ENCODE measurements at regions of chr16 and their contacts with region 1.

Region 1: DNA sequence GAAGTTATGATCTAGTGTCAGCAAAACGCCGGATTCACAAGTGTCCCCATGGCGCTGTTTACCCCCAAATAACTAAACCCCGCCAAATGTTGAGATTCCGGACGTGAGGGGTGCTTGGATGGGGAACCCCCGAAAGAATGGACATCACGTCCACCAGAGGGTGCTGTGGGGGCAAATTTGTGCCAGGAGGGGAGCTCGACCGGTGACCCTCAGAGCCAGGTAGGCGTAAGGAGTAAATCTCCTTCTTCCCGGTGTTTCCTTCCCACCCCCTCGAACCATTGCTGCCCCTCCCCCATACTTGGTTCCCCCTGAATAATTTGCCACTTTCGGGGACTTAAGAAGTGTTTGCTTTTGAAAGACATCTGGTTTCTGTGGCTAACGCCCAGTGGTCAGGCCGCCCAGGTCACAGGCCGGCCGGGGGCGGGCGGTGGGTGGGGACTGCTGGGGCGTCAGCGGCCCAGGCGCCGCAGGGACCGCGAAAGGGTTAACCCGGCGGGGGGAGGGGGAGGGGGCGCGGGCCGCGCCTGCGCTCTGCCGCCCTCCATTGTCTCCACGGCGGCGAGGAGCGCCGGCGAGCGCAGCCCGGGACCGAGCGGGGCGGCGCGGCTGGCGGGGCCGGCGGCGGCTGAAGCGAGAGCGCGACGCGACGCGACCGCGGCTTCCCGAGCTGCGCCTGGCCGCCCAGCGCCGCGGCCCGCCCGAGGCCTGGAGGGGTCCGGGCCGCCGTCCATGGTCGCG is at the start of gene ZNRF1:
- DNase-seq: peak; percentile 82

Region 2: DNA sequence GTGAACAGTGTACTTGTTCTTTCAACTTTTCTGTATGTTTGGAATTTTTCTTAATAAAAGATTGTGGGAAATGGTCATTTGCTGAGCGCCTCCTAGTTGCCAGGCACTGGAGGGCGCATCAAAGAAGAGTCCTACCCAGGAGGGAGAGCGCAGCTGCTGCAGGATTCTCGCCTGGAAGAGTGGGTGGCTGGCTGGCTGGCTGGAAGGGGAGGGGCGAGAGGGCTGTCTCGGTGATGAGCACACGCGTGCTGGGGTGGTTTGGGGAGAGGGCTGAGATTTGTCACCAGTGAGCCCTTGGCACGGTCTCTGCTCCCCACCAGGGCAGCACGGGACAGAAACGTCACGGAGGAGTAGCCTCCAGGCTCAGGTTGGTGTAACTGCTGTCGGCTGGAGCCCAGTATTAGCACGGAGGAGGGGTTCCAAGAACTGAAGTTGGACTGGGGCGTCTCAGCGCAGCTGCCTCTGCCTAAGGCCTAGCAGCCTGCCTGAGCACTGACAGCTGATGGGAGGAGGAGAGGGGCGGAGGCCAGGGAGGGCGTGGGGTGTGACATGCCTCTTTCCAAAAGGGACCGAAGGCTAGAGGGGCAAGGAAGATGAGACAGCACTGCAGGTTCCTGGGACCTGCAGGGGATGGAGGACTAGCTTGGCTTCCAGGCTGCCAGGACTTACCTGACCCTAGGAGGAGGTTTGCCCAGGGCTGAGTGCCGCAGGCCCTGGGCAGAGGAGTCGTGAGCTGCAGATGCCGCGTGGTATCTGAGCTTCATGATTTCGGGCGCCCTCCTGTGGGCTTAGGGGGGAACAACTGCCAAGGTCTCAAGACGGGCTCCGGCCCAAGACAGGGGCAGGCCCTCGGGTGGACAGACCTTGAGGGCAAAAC is 112.2 kb after region 1 on chr16:
- in situ Hi-C with region 1: loop called (anchors 10 kb)
- DNase-seq: peak; percentile 89

Region 3: GRCh38 chr16:75224306-75225091 is 225.8 kb after region 1 on chr16:
- in situ Hi-C with region 1: no loop called
- DNase-seq: no peak